Ascending aorta (tissue), 2 donors: ENCODE measurements at regions of chr13 and their contacts with region 1.

Region 1: GRCh38 chr13:33542283-33543088 is 256.9 kb upstream of the STARD13 start:
- DNase-seq: peak; percentile 96 to 100
- H3K4me3 ChIP-seq: peak overlapping the region; percentile 66 to 69
- H3K27ac ChIP-seq: peak overlapping the region; percentile 93 to 98
- H3K4me1 ChIP-seq: peaks cover 7 to 30% of the 10 kb centered on the region in 2 donors
- H3K27me3 ChIP-seq: no peaks in the 10 kb centered on the region
- CTCF ChIP-seq: peak; percentile 87 to 93 (median 91)

Region 2: GRCh38 chr13:32586080-32586900 is 956.2 kb before region 1 on chr13 and contains the start of gene PDS5B:
- intact Hi-C with region 1: loop called (anchors 1 kb)
- DNase-seq: peak; percentile 77 to 97
- H3K4me3 ChIP-seq: peak within 1 kb of the TSS; percentile 88 to 96
- H3K27ac ChIP-seq: peak within 1 kb of the TSS; percentile 86 to 98
- H3K4me1 ChIP-seq: peaks cover 0 to 18% of the 10 kb centered on the region in 2 donors
- H3K27me3 ChIP-seq: no peaks in the 10 kb centered on the region
- CTCF ChIP-seq: peak; percentile 57 to 99 (median 69)
- total RNA-seq, gene PDS5B: 31.0 TPM

Region 3: GRCh38 chr13:33228648-33229445 is 313.6 kb before region 1 on chr13:
- intact Hi-C with region 1: loop called (anchors 2 kb)
- DNase-seq: no peak
- H3K4me3 ChIP-seq: no peak overlapping the region
- H3K27ac ChIP-seq: no peak overlapping the region
- H3K4me1 ChIP-seq: peaks cover 0 to 19% of the 10 kb centered on the region in 2 donors
- H3K27me3 ChIP-seq: no peaks in the 10 kb centered on the region
- CTCF ChIP-seq: peak; percentile 74 to 91 (median 85)

Region 4: GRCh38 chr13:33454844-33455705 is 87.4 kb before region 1 on chr13:
- intact Hi-C with region 1: loop called (anchors 5 kb)
- DNase-seq: no peak
- H3K4me3 ChIP-seq: no peak overlapping the region
- H3K27ac ChIP-seq: peak overlapping the region; percentile 62 to 70
- H3K4me1 ChIP-seq: peaks cover 2 to 27% of the 10 kb centered on the region in 2 donors
- H3K27me3 ChIP-seq: no peaks in the 10 kb centered on the region
- CTCF ChIP-seq: no peak

Region 5: GRCh38 chr13:33610471-33611015 is 68.1 kb after region 1 on chr13:
- intact Hi-C with region 1: loop called (anchors 5 kb)
- DNase-seq: peak; percentile 14 to 84
- H3K4me3 ChIP-seq: peak overlapping the region; percentile 40 to 64
- H3K27ac ChIP-seq: peak overlapping the region; percentile 89 to 90
- H3K4me1 ChIP-seq: peaks cover 0 to 11% of the 10 kb centered on the region in 2 donors
- H3K27me3 ChIP-seq: no peaks in the 10 kb centered on the region
- CTCF ChIP-seq: no peak